ENCODE measurements at regions of chr7 and their contacts with region 1.

Region 1: GRCh38 chr7:101688183-101688831 is 59.2 kb upstream of the MYL10 start:
- DNase-seq: peak; percentile 66 to 88
- ATAC-seq: peak; percentile 57

Region 2: GRCh38 chr7:101644879-101645278 is 43.4 kb before region 1 on chr7:
- intact Hi-C with region 1: no loop called
- DNase-seq: peak in 1 of 2 donors; percentile 9
- ATAC-seq: peak; percentile 72

Region 3: GRCh38 chr7:101814991-101815834 is 126.9 kb after region 1 on chr7:
- intact Hi-C with region 1: loop called in 1 of 2 experiments (anchors 5 kb)
- DNase-seq: peak; percentile 47 to 69
- ATAC-seq: peak; percentile 59

Region 4: GRCh38 chr7:101990811-101991418 is 302.6 kb after region 1 on chr7:
- intact Hi-C with region 1: no loop called
- DNase-seq: peak in 1 of 2 donors; percentile 43
- ATAC-seq: no peak

Region 5: GRCh38 chr7:102236592-102237287 is 548.4 kb after region 1 on chr7:
- intact Hi-C with region 1: loop called in 1 of 2 experiments (anchors 10 kb)
- DNase-seq: peak; percentile 34 to 71
- ATAC-seq: peak; percentile 94